Activated T-helper 2 cell treated with anti-CD3 and anti-CD28 coated beads, Interferon-gamma antibody, Interleukin-2, Interleukin-4, amounts not matched to agents 10 μg/mL and 5 μg/mL and 100 μg/mL, durations not matched to agents 14 hours and 24 hours and 36 hours (primary cell): ENCODE measurements at regions of chr4 and their contacts with region 1.

Region 1: GRCh38 chr4:123477711-123478209 is 81.2 kb downstream of the SPRY1 start:
- DNase-seq: peak; percentile 57
- H3K4me3 Mint-ChIP-seq: peak overlapping the region; percentile 54
- H3K27ac Mint-ChIP-seq: peak overlapping the region; percentile 78
- H3K4me1 Mint-ChIP-seq: peaks cover 49% of the 10 kb centered on the region
- H3K27me3 Mint-ChIP-seq: no peaks in the 10 kb centered on the region

Region 2: GRCh38 chr4:123415977-123416376 is 61.8 kb before region 1 on chr4:
- intact Hi-C with region 1: loop called (anchors 2 kb)
- DNase-seq: peak; percentile 50
- H3K4me3 Mint-ChIP-seq: peak overlapping the region; percentile 14
- H3K27ac Mint-ChIP-seq: peak overlapping the region; percentile 85
- H3K4me1 Mint-ChIP-seq: peaks cover 70% of the 10 kb centered on the region
- H3K27me3 Mint-ChIP-seq: no peaks in the 10 kb centered on the region

Region 3: GRCh38 chr4:123444290-123444731 is 33.4 kb before region 1 on chr4:
- intact Hi-C with region 1: loop called (anchors 2 kb)
- DNase-seq: peak; percentile 28
- H3K4me3 Mint-ChIP-seq: peak overlapping the region; percentile 35
- H3K27ac Mint-ChIP-seq: peak overlapping the region; percentile 78
- H3K4me1 Mint-ChIP-seq: peaks cover 30% of the 10 kb centered on the region
- H3K27me3 Mint-ChIP-seq: no peaks in the 10 kb centered on the region

Region 4: DNA sequence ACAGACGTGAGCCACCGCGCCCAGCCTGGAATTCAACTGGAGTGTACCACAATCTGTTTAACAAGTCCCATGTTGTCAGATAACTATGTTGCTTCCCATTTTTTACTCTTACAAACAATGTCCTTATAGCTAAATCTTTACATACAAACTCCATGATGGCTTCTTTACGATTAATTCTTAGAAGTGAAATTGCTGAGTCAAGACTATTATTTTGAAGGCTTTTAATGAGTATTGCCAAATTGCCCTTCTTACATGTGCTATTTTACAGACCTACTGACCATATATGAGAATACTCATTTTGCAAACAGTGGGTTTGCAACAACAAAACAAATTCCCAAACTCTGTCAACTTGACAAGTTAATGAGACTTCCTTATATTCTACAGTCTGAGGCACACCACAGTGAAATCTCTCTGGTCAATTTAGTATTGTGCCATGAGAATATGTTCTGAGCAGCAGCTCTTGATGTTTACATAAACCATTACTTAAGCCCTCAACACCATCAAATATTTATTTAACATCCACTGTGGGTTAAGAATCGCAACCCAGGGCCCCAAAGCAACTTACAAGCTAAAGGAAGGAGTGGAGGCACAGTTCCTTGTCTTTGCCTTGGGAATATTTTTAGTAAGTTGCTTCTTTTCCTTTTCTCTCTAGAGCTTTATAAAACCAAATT is 47.3 kb after region 1 on chr4:
- intact Hi-C with region 1: loop called (anchors 10 kb)
- DNase-seq: no peak
- H3K4me3 Mint-ChIP-seq: no peak overlapping the region
- H3K27ac Mint-ChIP-seq: no peak overlapping the region
- H3K4me1 Mint-ChIP-seq: peaks cover 13% of the 10 kb centered on the region
- H3K27me3 Mint-ChIP-seq: peaks cover 7% of the 10 kb centered on the region

Region 5: GRCh38 chr4:123659730-123660129 is 182.0 kb after region 1 on chr4:
- intact Hi-C with region 1: loop called (anchors 5 kb)
- DNase-seq: no peak
- H3K4me3 Mint-ChIP-seq: no peak overlapping the region
- H3K27ac Mint-ChIP-seq: no peak overlapping the region
- H3K4me1 Mint-ChIP-seq: peaks cover 11% of the 10 kb centered on the region
- H3K27me3 Mint-ChIP-seq: peaks cover 25% of the 10 kb centered on the region